ENCODE measurements at regions of chr21 and their contacts with region 1.

Region 1: GRCh38 chr21:45363921-45364467 is 41.0 kb upstream of the COL18A1 start:
- DNase-seq: peak; percentile 83 to 93
- ATAC-seq: peak; percentile 80 to 92 (median 88)
- H3K4me3 ChIP-seq: peak overlapping the region in 4 of 10 donors; percentile 12 to 24 (median 18)
- H3K27ac ChIP-seq: peak overlapping the region; percentile 85 to 99 (median 95)
- H3K4me1 ChIP-seq: peaks cover 19 to 73% (median 48%) of the 10 kb centered on the region in 9 donors
- H3K27me3 ChIP-seq: no peaks in the 10 kb centered on the region
- CTCF ChIP-seq: no peak

Region 2: DNA sequence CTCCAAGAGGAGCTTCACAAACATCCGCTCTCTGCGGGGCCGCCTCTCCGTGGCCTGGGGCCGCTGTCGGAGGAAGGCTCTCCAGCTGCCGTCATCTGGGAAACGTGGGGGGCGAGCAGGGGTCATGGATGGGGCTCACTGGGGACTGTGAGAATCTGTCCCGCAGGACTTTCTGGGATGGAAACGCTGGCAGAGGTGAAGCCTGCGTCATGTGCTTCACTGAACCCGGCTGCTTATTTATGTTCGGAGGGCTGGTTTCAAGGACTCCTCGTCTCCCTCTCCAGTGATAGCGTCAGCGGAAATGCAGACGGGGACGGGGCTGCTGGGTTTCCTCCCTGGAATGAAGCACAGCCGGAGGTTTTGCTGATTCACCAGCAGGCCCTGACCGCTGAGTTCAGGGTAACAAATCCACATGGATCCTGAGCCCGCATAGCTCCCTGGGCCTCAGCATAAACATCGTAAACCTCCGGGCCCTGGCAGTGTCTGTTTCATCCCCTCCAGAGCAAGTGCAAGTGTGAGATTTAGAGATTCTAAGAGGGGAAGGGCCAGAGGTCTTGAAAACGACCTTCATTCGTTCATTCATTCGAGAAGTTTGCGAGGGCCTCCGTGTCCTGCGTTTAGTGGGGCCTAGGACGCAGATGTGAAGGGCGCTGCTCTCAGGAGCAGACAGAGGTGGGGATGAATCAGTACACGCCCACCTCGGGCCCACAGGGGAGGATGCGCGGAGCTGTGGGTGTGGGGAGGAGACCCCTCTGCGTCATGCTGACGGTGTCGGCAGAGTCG is 69.3 kb before region 1 on chr21:
- intact Hi-C with region 1: loop called in 1 of 10 experiments (anchors 5 kb)
- DNase-seq: peak; percentile 89 to 92
- ATAC-seq: peak; percentile 55 to 87 (median 79)
- H3K4me3 ChIP-seq: peak overlapping the region in 3 of 10 donors; percentile 0 to 21 (median 18)
- H3K27ac ChIP-seq: peak overlapping the region; percentile 84 to 97 (median 94)
- H3K4me1 ChIP-seq: peaks cover 26 to 73% (median 46%) of the 10 kb centered on the region in 9 donors
- H3K27me3 ChIP-seq: no peaks in the 10 kb centered on the region
- CTCF ChIP-seq: no peak

Region 3: DNA sequence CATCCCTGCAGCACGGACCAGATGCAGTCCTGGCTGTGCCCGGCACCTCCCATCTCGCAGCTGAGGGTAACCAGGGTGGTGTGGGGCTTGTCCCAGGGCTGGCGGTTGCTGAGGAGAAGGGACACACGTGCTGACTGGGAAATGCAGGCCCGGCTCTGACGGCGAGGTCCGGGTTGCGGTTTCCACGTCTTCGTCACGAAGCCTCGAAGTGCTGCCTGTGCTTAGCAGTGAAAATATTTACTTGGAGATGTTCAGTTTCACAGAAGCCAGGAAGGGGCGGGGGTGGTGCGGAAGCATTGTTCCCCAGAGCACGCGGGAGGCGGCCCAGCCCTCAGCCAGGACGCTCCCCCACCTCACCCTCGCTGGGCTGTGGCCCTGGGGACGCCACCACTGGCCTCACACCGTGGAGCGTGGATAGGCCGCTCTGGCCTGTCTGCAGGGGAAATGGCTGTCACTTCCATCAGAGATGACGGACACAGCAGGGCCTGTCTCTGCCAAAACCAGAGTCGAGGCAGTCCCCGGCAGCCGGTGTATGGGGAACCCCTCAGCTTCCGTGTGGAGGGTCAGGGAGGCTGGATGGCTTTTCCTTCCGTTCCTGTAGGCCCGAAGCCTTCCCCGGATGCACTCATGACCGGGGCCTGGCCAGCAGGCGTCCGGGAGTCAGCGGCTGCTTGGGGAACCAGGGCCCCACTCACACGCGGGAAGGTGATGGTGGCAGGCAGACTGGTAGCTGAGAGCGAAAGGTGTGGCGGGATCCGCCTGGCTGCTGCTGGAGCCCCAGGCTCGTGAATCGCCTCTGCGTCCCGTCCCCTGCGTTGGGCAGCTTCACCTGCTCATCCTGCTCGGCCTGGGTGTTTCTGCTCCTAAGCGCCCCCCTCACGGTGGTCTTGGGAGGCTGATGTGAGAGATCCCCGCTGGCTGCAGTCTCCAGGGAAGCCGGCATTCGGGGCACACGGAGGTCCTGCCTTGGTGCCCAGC is 61.6 kb before region 1 on chr21:
- intact Hi-C with region 1: loop called in 7 of 10 experiments (anchors 1 to 10 kb)
- DNase-seq: peak; percentile 82 to 92
- ATAC-seq: peak; percentile 70 to 88 (median 82)
- H3K4me3 ChIP-seq: no peak overlapping the region
- H3K27ac ChIP-seq: peak overlapping the region; percentile 88 to 97 (median 90)
- H3K4me1 ChIP-seq: peaks cover 27 to 68% (median 48%) of the 10 kb centered on the region in 9 donors
- H3K27me3 ChIP-seq: no peaks in the 10 kb centered on the region
- CTCF ChIP-seq: peak in 1 of 9 donors; percentile 11

Region 4: DNA sequence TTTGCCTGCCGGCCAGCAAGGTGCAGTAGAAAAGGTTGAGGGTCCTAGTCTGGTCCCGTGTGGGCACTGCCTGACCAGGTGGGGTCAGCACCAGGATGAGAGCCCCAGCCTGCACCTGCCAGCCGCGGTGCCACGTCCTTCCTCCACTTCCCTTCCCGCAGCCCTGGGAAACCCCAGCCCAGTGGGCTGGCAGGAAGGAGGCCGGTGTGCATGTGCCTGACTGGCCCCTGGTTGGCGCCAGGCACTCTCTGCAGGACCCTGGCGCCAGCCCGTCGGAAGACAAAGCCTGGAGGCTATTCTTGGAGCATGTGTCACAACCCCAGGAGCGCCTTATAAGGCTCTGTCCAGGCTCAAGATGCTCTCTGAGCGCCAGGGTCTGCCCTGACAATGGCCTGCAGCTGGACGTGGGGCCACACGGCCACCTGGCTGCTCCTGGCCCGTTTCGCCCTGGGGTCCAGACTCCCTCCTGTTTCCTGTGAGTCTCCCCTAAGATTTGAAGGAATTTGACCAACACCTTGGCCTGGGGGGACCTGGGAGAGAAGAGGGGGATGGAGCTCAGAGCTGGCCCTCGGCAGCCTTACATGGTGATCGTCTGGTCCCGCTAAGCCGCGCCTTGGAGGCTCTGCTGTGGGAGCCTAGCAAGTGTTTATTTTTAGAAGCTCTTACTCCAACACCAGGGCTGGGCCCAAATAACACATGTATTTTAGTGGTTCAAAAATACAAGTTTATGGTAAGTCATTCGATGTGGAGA is 44.4 kb before region 1 on chr21:
- intact Hi-C with region 1: loop called in 4 of 10 experiments (anchors 2 to 5 kb)
- DNase-seq: peak; percentile 68 to 76
- ATAC-seq: peak; percentile 71 to 88 (median 84)
- H3K4me3 ChIP-seq: no peak overlapping the region
- H3K27ac ChIP-seq: peak overlapping the region; percentile 78 to 94 (median 85)
- H3K4me1 ChIP-seq: peaks cover 34 to 65% (median 46%) of the 10 kb centered on the region in 9 donors
- H3K27me3 ChIP-seq: no peaks in the 10 kb centered on the region
- CTCF ChIP-seq: peak in 5 of 9 donors; percentile 18 to 49 (median 28)